ENCODE measurements at regions of chr12 and their contacts with region 1.

Region 1: GRCh38 chr12:108618079-108618952 is 15.4 kb downstream of the SELPLG start:
- DNase-seq: peak; percentile 82
- ATAC-seq: peak; percentile 69
- H3K4me3 Mint-ChIP-seq: no peak overlapping the region
- H3K27ac Mint-ChIP-seq: peak overlapping the region; percentile 71
- H3K4me1 Mint-ChIP-seq: peaks cover 52% of the 10 kb centered on the region
- H3K27me3 Mint-ChIP-seq: no peaks in the 10 kb centered on the region

Region 2: GRCh38 chr12:108482717-108483212 is 135.6 kb before region 1 on chr12:
- CTCF ChIA-PET with region 1: no interaction called
- POLR2A ChIA-PET with region 1: no interaction called
- DNase-seq: no peak
- ATAC-seq: no peak
- H3K4me3 Mint-ChIP-seq: no peak overlapping the region
- H3K27ac Mint-ChIP-seq: no peak overlapping the region
- H3K4me1 Mint-ChIP-seq: peaks cover 3% of the 10 kb centered on the region
- H3K27me3 Mint-ChIP-seq: peaks cover 11% of the 10 kb centered on the region

Region 3: DNA sequence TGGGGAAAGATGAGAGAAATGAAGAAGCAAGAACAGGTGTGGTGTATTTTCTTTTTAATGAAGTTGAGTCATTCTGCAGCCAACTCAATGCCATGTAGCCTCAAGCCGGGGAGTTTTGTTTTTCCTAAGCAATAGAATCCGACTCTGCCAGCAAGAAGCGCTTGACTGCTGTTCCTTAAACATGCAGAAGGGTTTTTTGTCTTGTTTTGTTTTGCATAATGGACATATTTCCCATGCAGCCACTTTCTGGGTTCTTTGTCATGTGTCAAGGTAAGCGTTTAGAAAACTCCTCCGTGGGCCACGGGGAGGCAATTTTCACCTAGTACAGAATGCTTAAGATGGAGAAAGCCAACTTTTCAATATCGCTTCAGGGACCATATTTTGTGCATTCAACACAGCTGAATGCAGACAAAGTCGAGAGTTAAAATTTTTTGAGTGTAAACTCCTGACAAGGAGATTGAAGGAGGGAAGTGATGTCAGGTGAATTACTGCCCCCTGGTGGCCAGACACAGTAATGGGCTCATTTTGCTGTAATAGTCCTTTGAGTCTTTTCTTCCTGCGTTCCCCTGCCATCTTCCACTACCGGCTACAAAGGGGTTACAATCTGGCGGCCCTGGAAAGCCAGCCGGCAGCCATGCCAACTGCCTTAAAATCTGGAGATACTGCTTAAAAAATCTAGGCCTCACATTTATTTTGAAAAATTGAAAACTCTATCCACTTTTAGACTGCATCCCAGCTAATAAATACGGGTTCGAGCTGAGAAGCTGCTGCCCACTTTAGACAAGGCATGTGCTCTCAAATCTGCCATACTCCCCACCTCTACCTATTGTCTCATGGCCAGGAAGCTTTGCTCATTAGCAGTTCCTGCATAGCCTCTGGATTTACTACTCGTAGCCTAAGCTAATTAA is 106.4 kb before region 1 on chr12:
- CTCF ChIA-PET with region 1: interaction called, 10 read pairs
- POLR2A ChIA-PET with region 1: no interaction called
- DNase-seq: peak; percentile 85
- ATAC-seq: no peak
- H3K4me3 Mint-ChIP-seq: peak overlapping the region; percentile 28
- H3K27ac Mint-ChIP-seq: no peak overlapping the region
- H3K4me1 Mint-ChIP-seq: peaks cover 27% of the 10 kb centered on the region
- H3K27me3 Mint-ChIP-seq: no peaks in the 10 kb centered on the region

Region 4: DNA sequence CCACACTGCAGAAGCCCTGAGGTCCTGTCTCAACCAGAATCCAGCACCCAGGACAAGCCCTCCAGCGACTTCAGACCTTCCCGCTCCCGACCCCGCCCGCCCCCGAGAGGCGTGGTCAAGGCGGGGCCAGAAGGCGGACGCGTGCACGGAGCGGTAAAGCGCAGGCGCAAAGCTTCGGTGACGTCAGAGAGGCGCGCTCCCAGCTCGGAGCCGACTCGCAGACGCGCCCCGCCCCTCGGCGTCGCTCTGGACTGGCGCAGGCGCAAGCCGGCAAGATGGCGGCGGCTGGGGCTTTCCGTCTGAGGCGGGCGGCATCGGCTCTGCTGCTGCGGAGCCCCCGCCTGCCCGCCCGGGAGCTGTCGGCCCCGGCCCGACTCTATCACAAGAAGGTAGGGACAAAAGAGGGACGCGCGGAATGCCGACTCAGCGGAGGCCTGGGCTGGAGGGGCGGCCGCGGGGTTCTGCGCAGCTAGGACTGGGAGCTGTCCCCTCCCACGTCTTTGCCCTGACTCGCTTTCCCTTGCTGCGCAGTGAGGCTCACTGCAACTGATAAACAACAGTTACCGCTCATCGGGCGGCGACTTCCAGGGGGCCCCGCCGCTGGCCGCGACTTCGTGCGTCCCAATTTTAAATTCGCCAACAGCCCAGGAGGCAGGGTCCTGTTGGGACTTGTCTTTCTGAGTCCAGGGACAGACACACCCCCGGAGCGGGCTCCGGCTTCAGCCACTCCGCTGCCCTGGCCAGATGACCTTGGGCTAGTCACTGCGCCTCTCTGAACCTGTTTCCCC is 55.8 kb before region 1 on chr12 and contains the start of gene ISCU:
- CTCF ChIA-PET with region 1: interaction called, 574 read pairs
- POLR2A ChIA-PET with region 1: interaction called, 43 read pairs
- DNase-seq: peak; percentile 98
- ATAC-seq: peak; percentile 78
- H3K4me3 Mint-ChIP-seq: peak within 1 kb of the TSS; percentile 100
- H3K27ac Mint-ChIP-seq: peak within 1 kb of the TSS; percentile 100
- H3K4me1 Mint-ChIP-seq: peaks cover 67% of the 10 kb centered on the region
- H3K27me3 Mint-ChIP-seq: no peaks in the 10 kb centered on the region
- total RNA-seq, gene ISCU: 58.5 to 59.5 TPM

Region 5: DNA sequence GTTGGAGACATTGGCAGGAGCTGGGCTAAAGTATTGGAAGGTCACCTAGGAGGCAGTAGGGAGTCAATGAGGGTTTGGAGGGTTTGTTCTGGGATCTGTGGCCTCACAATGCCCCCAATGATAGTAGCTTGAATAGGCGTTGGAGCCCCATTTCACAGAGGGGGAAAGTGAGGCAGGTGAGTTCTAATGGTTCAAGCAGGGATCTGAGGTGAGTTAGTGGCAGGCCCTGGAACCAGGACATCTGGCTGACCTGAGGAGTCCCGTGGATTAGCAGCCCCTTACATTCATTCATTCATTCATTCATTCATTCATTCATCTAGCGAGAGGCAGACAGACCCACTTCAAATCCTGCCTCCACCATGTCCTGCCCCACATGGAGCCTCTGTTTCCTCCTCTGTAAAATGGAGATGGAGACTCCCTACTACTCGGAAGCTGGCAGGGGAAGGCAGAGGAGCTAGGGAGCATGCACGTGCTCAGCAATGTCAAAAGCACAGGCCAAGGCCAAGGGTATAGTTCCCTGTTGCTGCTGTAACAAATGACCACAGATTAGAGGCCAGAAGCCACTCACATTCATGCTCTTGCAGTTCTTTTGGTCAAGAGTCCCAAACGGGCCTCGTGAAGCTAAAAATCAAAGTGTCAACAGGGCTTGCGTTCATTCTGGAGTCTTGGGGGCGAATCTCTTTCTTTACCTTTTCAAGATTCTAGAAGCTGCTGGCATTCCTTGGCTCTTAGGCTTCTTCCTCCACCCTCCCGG is 18.2 kb before region 1 on chr12:
- CTCF ChIA-PET with region 1: interaction called, 12 read pairs
- POLR2A ChIA-PET with region 1: interaction called, 4 read pairs
- DNase-seq: no peak
- ATAC-seq: no peak
- H3K4me3 Mint-ChIP-seq: no peak overlapping the region
- H3K27ac Mint-ChIP-seq: no peak overlapping the region
- H3K4me1 Mint-ChIP-seq: no peaks in the 10 kb centered on the region
- H3K27me3 Mint-ChIP-seq: peaks cover 5% of the 10 kb centered on the region

Region 6: GRCh38 chr12:108605000-108605689 is 13.2 kb before region 1 on chr12:
- CTCF ChIA-PET with region 1: interaction called, 12 read pairs
- POLR2A ChIA-PET with region 1: interaction called, 4 read pairs
- DNase-seq: no peak
- ATAC-seq: peak; percentile 29
- H3K4me3 Mint-ChIP-seq: peak overlapping the region; percentile 54
- H3K27ac Mint-ChIP-seq: peak overlapping the region; percentile 83
- H3K4me1 Mint-ChIP-seq: no peaks in the 10 kb centered on the region
- H3K27me3 Mint-ChIP-seq: peaks cover 9% of the 10 kb centered on the region

Region 7: DNA sequence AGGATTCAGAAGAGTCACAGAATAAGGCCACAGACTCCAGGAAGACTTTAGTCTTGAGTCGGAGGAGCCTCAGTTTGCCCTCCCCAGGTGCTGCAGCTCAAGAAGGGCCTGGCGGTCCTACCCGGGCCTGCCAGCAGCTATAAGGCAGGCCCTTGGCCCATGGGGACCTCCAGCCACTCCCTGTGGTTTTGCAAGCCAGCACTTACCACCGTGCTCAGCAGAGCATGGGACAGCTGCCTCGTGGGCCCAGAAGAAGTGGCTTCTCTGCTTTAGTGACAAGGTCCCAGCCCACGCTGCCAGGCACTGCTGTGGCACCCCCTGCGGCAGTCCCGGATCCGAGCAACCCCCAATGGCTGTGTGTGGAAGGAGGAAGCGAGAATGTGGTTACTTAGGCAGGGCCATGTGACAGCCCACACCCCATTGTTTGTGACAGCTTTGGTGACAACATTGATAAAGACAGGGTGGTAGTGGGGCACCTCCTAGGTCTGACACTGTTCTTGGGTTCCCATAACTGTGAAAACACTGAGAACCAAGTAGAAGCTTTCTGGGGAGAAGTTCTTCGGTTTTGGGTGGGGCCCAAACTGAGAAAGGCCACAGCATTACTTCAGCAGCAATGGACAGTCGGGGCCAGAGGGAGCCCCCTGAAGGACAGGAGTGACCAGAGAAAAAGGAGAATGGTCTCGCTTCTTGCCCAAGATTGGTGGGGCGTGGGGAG is 15.4 kb after region 1 on chr12 and contains the start of gene SELPLG:
- CTCF ChIA-PET with region 1: interaction called, 250 read pairs
- POLR2A ChIA-PET with region 1: interaction called, 115 read pairs
- DNase-seq: peak; percentile 92
- ATAC-seq: peak; percentile 59
- H3K4me3 Mint-ChIP-seq: peak within 1 kb of the TSS; percentile 100
- H3K27ac Mint-ChIP-seq: peak within 1 kb of the TSS; percentile 99
- H3K4me1 Mint-ChIP-seq: peaks cover 63% of the 10 kb centered on the region
- H3K27me3 Mint-ChIP-seq: no peaks in the 10 kb centered on the region
- total RNA-seq, gene SELPLG: 144 to 150 TPM

Region 8: DNA sequence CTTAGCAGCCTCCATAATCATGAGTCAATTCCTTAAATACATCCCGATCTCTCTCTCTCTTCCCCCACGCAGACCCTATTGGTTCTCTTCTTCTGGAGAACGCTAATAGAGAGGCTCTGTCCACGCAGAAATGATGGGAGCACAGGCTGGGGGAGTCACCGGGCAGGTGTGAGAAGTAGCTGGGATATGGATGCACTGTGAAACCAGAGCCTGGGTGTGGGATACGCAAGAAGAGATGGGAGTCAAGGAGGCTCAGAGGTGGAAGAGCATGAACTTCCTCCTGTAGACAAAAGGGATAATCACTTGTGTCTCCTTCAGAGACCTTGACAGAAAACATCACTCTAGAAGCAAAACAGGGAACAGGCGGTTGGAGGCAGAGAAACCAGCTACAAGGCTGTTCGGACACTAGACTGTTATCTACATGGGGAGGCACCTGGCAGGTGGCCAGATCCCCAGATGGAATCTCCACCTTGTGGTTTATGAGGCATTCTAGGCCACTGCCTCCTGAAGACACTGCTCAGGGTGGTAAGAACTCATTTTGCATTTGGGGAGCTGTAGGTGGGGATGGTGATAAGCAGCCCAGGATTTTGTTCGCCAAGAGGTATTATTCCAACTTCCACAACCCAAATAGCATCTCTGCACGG is 22.6 kb after region 1 on chr12:
- CTCF ChIA-PET with region 1: interaction called, 250 read pairs
- POLR2A ChIA-PET with region 1: interaction called, 115 read pairs
- DNase-seq: no peak
- ATAC-seq: no peak
- H3K4me3 Mint-ChIP-seq: no peak overlapping the region
- H3K27ac Mint-ChIP-seq: no peak overlapping the region
- H3K4me1 Mint-ChIP-seq: peaks cover 45% of the 10 kb centered on the region
- H3K27me3 Mint-ChIP-seq: no peaks in the 10 kb centered on the region

Measured in activated CD8-positive, alpha-beta T cell treated with anti-CD3 and anti-CD28 coated beads, Interleukin-2, amount 10 ng/mL, durations not matched to agents 7 days and 5 days (primary cell).